ENCODE measurements at regions of chr6 and their contacts with region 1.

Region 1: GRCh38 chr6:135909737-135910387 is 58.4 kb downstream of the PDE7B start:
- H3K4me3 ChIP-seq: no peak overlapping the region
- H3K27ac ChIP-seq: no peak overlapping the region
- H3K4me1 ChIP-seq: no peaks in the 10 kb centered on the region
- CTCF ChIP-seq: no peak

Region 2: DNA sequence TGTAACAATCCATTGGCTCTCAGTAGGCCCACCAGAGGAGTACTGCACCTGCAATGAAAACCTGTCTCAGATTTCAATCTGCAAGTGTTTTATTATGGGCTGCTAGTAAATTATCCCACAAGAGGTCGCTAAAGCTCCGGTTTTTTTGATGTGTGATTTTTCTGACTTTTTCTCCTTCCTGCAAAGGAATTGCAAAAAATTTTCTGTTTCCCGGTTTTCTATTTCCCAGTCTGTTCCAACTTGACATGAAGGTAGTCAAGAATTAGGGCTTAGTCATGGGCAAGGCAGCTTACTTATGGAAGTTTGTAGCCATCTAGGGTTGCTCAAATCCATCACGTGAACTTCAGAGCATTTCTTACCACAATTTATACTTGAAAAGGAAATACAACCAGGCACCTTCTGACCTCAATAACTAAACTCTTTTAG is 373.9 kb before region 1 on chr6:
- CTCF ChIA-PET with region 1: interaction called, 20 read pairs
- POLR2A ChIA-PET with region 1: no interaction called
- H3K4me3 ChIP-seq: no peak overlapping the region
- H3K27ac ChIP-seq: no peak overlapping the region
- H3K4me1 ChIP-seq: no peaks in the 10 kb centered on the region
- CTCF ChIP-seq: no peak

Region 3: GRCh38 chr6:135675862-135676261 is 234.0 kb before region 1 on chr6:
- CTCF ChIA-PET with region 1: interaction called, 13 read pairs
- POLR2A ChIA-PET with region 1: no interaction called
- H3K4me3 ChIP-seq: no peak overlapping the region
- H3K27ac ChIP-seq: no peak overlapping the region
- H3K4me1 ChIP-seq: no peaks in the 10 kb centered on the region
- CTCF ChIP-seq: peak; percentile 69

Region 4: DNA sequence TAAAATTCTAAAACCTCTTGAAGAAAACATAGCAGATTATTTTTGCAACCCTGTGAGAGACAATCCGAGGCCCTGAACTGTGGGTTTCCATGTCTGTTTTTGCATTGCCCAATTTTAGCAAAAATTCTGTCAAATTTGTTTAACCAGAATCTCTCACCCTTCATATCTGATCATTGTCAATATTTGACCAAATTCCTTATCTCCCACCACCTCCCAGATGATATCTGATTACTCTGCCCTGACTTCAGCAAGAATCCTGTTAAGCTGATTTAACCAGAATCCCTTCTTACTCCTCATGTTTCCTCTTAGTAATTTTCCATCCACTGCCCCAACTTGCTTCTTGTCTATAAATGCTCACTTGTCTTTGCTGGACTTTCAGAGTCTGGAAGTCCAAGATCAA is 105.6 kb before region 1 on chr6:
- CTCF ChIA-PET with region 1: interaction called, 10 read pairs
- POLR2A ChIA-PET with region 1: no interaction called
- H3K4me3 ChIP-seq: no peak overlapping the region
- H3K27ac ChIP-seq: no peak overlapping the region
- H3K4me1 ChIP-seq: no peaks in the 10 kb centered on the region
- CTCF ChIP-seq: no peak

Region 5: DNA sequence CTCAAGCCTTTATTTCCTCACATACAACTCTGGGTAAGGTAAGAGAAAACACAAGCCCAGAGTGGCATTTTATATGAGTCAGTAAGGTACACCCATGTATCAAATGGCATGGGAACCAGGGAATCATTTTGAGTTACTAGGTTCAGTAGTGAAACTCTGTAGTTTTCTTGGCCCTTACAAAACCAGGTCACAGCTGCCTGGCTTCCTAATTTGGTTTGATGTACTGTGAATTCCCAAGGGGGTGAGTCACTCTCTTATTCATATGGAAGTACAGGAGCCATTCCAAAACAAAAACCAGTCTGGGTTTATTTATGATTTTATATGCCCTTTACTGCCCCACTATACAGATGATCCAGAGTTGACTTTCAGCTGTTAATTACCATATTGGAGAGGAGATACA is 12.3 kb after region 1 on chr6:
- CTCF ChIA-PET with region 1: interaction called, 37 read pairs
- POLR2A ChIA-PET with region 1: interaction called, 3 read pairs
- H3K4me3 ChIP-seq: no peak overlapping the region
- H3K27ac ChIP-seq: no peak overlapping the region
- H3K4me1 ChIP-seq: peaks cover 7% of the 10 kb centered on the region
- CTCF ChIP-seq: no peak